ENCODE measurements at regions of chr12 and their contacts with region 1.

Region 1: GRCh38 chr12:49687941-49688340 is 19.3 kb downstream of the FMNL3 start:
- DNase-seq: no peak
- ATAC-seq: no peak
- H3K4me3 Mint-ChIP-seq: no peak overlapping the region
- H3K27ac Mint-ChIP-seq: no peak overlapping the region
- H3K4me1 Mint-ChIP-seq: peaks cover 54% of the 10 kb centered on the region
- H3K27me3 Mint-ChIP-seq: no peaks in the 10 kb centered on the region

Region 2: DNA sequence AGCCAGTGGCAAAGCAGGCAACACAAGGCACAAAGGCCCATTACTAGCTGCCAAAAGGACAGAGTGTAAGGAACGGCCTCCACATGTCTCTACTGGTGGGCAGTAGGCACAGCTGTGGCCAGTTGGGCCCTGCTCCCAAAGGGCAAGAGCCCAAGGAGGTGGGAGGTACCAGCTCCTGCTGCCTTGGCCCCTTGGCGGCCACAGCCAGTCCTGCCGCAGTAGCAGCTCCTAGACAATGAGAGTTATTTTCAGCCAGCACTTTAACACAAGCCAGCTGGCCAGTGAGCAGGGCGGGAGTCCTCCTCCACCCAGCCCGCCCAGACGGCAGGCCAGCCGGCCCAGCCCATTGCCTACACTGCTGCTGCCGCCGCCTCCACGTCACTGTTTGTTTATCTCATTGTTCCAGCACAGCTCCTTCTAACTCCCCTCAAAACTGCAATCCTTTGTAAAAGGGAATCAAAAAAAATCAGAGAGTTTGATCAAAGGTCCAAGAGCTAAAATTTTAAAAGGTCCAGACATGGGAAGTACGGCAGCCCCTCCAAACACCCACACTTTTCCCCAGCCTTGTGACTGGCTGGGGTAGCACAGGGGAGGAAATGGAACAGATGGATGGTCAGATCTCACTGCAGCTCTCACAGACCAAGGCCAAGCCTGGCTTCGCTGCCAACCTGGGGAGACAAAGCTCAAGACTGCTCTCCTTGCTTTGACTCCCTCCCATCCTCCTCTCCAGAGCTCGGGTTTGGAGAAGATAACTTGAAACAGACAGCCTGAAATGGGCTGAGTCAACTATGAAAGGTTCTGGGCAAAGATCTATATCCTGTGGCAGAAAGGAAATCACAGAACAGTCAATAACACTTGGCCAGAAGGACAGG is 14.3 kb before region 1 on chr12:
- CTCF ChIA-PET with region 1: interaction called, 25 read pairs
- POLR2A ChIA-PET with region 1: interaction called, 5 read pairs
- intact Hi-C with region 1: no loop called
- DNase-seq: peak; percentile 28
- ATAC-seq: peak; percentile 34
- H3K4me3 Mint-ChIP-seq: no peak overlapping the region
- H3K27ac Mint-ChIP-seq: peak overlapping the region; percentile 93
- H3K4me1 Mint-ChIP-seq: peaks cover 82% of the 10 kb centered on the region
- H3K27me3 Mint-ChIP-seq: no peaks in the 10 kb centered on the region

Measured in activated CD4-positive, alpha-beta T cell treated with anti-CD3 and anti-CD28 coated beads for 36 hours (primary cell).